Dorsolateral prefrontal cortex (tissue), 120 donors: ENCODE measurements at regions of chr15 and their contacts with region 1.

Region 1: DNA sequence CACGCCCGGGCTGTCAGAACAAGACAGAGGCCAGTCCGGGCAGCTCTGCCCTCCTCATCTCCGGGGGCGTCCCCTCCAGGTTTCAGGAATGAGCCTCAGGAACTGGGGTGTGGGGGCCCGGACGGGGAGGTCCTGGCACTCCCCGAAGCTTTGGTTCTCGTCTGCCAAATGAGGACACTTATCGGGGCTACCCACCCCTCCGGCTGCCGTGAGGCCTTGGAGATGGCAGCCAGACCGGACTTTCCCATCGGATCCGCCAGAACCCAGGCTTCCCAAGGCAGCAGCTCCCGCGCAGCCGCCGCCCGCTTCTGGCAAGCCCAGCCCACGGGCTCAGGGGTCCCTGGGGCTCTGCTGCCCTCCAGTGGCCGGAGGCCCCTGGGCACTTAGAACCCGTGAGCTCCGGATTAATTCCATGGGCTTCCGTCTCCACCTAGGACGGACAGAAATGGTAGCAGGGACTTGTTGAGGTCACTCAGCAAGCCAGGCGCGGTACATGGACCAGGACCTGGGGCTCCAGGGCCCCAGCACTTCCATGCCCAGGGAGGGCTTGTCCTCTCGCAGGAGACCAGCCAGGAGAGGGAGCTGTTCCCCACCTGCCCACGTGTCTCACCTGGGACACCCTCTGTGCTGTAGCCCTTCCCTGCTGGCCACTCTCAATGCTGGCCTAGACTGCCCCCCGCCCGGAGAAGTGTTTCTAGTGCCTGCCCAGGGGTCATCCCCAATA is 89.4 kb downstream of the LINGO1 start:
- DNase-seq: peak; percentile 78 to 90 (median 84)
- H3K4me3 ChIP-seq: peak overlapping the region in 58 of 59 donors; percentile 24 to 68 (median 52)
- H3K27ac ChIP-seq: peak overlapping the region; percentile 42 to 98 (median 91)
- H3K27me3 ChIP-seq: no peaks in the 10 kb centered on the region
- CTCF ChIP-seq: peak; percentile 90 to 100 (median 99)

Region 2: DNA sequence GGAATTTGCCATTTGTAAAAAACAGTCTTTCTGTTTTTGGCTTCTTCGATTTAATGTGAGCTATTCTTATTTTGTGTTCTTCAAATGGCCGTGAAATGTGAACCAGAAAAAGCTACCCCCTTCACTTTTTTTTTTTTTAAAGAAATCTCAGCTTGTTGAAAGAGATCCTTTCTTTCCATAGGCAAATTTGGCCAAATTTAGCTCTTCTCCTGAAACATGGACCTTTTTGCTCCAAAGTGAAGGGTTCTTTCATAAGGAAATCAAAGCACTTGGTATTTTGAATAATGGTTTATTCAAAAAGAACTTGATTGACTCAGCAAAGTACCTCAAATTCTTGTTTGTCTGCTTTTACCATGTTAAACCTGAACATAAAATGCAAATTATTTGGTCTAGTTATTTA is 601.7 kb before region 1 on chr15:
- intact Hi-C with region 1: loop called in 1 of 2 experiments (anchors 2 kb)
- DNase-seq: no peak
- H3K4me3 ChIP-seq: peak overlapping the region in 6 of 59 donors; percentile 0 to 27 (median 12)
- H3K27ac ChIP-seq: peak overlapping the region in 57 of 59 donors; percentile 6 to 86 (median 67)
- H3K27me3 ChIP-seq: no peaks in the 10 kb centered on the region
- CTCF ChIP-seq: peak in 13 of 56 donors; percentile 0 to 40 (median 12)

Region 3: DNA sequence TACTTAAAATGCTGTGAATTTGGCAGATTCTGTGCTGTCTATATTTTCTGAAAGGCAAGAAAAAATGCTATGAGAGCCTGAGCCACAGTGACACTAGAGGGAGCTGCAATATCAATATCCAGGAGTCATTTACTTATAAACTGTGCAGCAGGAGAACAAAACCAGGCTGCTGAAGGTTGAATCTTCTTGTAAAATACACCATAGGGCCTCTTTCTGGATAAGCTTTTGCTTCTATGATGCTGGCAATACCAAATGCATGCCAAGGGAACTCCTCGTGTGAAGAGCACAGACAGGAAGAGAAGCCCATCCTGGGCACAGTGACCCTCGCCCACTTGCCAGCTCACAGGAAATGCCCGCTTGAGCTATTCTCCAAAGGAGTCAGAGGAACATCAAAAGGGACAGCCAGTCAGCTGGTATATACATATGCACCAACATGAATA is 424.4 kb before region 1 on chr15:
- intact Hi-C with region 1: loop called (anchors 2 kb)
- DNase-seq: peak in 2 of 10 donors; percentile 40 to 73
- H3K4me3 ChIP-seq: no peak overlapping the region
- H3K27ac ChIP-seq: peak overlapping the region in 26 of 59 donors; percentile 2 to 71 (median 38)
- H3K27me3 ChIP-seq: no peaks in the 10 kb centered on the region
- CTCF ChIP-seq: peak; percentile 54 to 93 (median 78)

Region 4: DNA sequence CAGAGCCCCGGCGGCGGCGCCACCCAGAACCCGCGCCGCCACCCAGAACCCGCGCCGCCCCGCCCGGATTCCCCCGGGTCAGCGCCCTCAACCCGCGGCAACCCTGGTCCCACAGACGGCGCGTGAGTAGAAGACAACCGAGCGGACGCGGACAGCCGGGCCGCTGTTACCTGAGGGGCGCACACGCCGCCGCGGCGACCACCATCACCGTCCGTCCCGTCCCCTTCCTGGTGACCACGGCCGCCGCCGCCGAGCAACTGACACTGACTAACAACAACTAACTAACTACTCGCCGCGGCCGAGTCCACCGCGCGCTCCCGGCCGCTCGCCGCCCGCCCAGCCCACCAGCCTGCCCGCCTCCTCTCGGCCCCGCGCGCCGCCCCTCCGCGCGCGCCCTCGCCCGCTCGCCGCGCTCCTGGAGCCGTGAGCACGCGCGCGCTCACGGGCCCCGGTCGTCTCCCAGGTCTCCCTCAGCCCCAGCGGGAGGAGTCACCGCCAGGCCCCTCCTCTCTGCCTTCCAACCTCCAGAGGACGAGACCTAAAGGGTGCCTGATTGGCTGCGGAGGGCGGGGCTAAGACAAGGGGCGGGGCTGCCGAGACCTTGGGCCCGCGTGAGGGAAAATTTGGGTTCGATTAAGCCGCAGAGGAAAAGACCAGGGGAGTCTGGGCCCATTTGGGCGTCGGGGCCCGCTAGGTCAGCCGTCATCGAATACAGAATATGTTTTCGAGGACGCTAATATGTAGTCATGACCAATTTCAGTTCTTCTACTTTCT is 123.3 kb before region 1 on chr15 and contains the start of gene PEAK1:
- intact Hi-C with region 1: loop called (anchors 1 to 2 kb)
- DNase-seq: peak; percentile 95 to 100 (median 98)
- H3K4me3 ChIP-seq: peak within 1 kb of the TSS; percentile 60 to 97 (median 89)
- H3K27ac ChIP-seq: peak within 1 kb of the TSS; percentile 86 to 99 (median 96)
- H3K27me3 ChIP-seq: no peaks in the 10 kb centered on the region
- CTCF ChIP-seq: peak in 5 of 56 donors; percentile 2 to 11 (median 5)
- total RNA-seq, gene PEAK1: 66.5 to 124 (median 92.9) TPM

Region 5: GRCh38 chr15:77507911-77508310 is 35.4 kb before region 1 on chr15:
- intact Hi-C with region 1: loop called in 1 of 2 experiments (anchors 2 kb)
- DNase-seq: peak in 6 of 10 donors; percentile 55 to 71 (median 62)
- H3K4me3 ChIP-seq: peak overlapping the region in 23 of 59 donors; percentile 2 to 35 (median 20)
- H3K27ac ChIP-seq: peak overlapping the region; percentile 36 to 99 (median 93)
- H3K27me3 ChIP-seq: no peaks in the 10 kb centered on the region
- CTCF ChIP-seq: peak in 2 of 56 donors; percentile 4 to 21

Region 6: GRCh38 chr15:77526791-77527778 is 16.2 kb before region 1 on chr15:
- intact Hi-C with region 1: no loop called
- DNase-seq: peak in 3 of 10 donors; percentile 8 to 32 (median 18)
- H3K4me3 ChIP-seq: no peak overlapping the region
- H3K27ac ChIP-seq: peak overlapping the region in 6 of 59 donors; percentile 2 to 53 (median 34)
- H3K27me3 ChIP-seq: no peaks in the 10 kb centered on the region
- CTCF ChIP-seq: no peak

Region 7: GRCh38 chr15:77720655-77721054 is 177.3 kb after region 1 on chr15:
- intact Hi-C with region 1: no loop called
- DNase-seq: peak in 1 of 10 donors; percentile 64
- H3K4me3 ChIP-seq: no peak overlapping the region
- H3K27ac ChIP-seq: peak overlapping the region in 34 of 59 donors; percentile 6 to 73 (median 30)
- H3K27me3 ChIP-seq: no peaks in the 10 kb centered on the region
- CTCF ChIP-seq: no peak